Endothelial cell of umbilical vein (primary cell): ENCODE measurements at regions of chr1 and their contacts with region 1.

Region 1: DNA sequence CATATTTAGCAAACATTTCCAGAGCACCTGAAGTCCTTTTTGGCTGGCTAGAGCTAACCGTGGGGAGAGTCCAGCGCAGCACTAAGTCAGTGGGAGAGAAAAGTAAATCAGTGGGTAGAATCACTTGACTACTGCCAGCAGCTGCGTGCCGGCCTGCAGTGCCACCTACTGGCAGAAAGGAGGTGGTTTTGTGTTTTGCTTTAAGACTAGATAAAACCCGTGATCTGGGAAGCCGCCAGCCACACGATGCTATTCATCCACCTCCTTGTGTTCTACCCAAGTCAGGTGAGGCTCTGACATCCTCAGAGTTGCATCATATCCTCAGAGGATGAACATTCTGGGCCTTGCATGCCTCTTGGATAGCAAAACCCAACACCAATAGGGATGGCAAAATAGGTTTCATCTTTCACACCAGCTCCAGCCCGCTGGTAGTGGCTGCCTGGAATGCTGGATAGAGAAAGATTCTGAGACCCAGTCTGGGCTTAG is 14.1 kb upstream of the HEYL start:
- DNase-seq: peak; percentile 73
- H3K4me3 ChIP-seq: no peak overlapping the region
- H3K27ac ChIP-seq: no peak overlapping the region
- H3K4me1 ChIP-seq: no peaks in the 10 kb centered on the region
- H3K27me3 ChIP-seq: peaks cover 9 to 10% of the 10 kb centered on the region in 2 experiments
- CTCF ChIP-seq: peak; percentile 85 to 90
- POLR2A ChIP-seq: no peak

Region 2: GRCh38 chr1:39632682-39633417 is 20.7 kb before region 1 on chr1:
- CTCF ChIA-PET with region 1: interaction called, 14 read pairs
- POLR2A ChIA-PET with region 1: no interaction called
- dilution Hi-C with region 1: no loop called
- intact Hi-C with region 1: no loop called
- DNase-seq: peak; percentile 38
- H3K4me3 ChIP-seq: no peak overlapping the region
- H3K27ac ChIP-seq: no peak overlapping the region
- H3K4me1 ChIP-seq: no peaks in the 10 kb centered on the region
- H3K27me3 ChIP-seq: peaks cover 59 to 70% of the 10 kb centered on the region in 2 experiments
- CTCF ChIP-seq: no peak
- POLR2A ChIP-seq: no peak

Region 3: GRCh38 chr1:39639305-39640130 is 14.1 kb before region 1 on chr1 and contains the start of gene HEYL:
- CTCF ChIA-PET with region 1: interaction called, 14 read pairs
- POLR2A ChIA-PET with region 1: interaction called, 3 read pairs
- dilution Hi-C with region 1: no loop called
- intact Hi-C with region 1: no loop called
- DNase-seq: no peak
- H3K4me3 ChIP-seq: no peak within 1 kb of the TSS
- H3K27ac ChIP-seq: no peak within 1 kb of the TSS
- H3K4me1 ChIP-seq: no peaks in the 10 kb centered on the region
- H3K27me3 ChIP-seq: peaks cover 44 to 59% of the 10 kb centered on the region in 2 experiments
- CTCF ChIP-seq: peak; percentile 14 to 32
- POLR2A ChIP-seq: no peak
- total RNA-seq, gene HEYL: not detected in 2 replicates

Region 4: DNA sequence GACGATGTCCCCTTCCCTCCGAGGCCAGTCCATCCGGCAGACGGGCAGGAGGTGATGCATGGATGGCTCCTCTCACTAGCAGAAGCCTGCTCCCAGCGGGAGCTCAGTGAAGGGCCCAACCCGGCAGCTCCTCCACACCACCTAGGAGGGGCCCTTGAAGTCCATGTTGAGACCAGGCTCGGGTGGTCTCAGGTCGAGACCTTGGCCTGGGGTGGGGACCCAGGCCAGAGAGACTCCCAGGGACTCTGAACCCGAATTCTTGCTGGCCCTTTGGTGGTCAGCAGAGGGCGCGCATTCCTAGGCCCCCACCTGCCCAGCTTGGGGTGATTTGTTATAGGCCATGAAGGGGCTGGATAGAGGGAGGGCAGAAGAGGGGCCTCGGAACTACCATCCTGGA is 19.0 kb after region 1 on chr1:
- CTCF ChIA-PET with region 1: interaction called, 113 read pairs
- POLR2A ChIA-PET with region 1: interaction called, 4 read pairs
- dilution Hi-C with region 1: no loop called
- intact Hi-C with region 1: no loop called
- DNase-seq: peak; percentile 13
- H3K4me3 ChIP-seq: no peak overlapping the region
- H3K27ac ChIP-seq: no peak overlapping the region
- H3K4me1 ChIP-seq: no peaks in the 10 kb centered on the region
- H3K27me3 ChIP-seq: peaks cover 42 to 49% of the 10 kb centered on the region in 2 experiments
- CTCF ChIP-seq: peak; percentile 39 to 66
- POLR2A ChIP-seq: no peak

Region 5: DNA sequence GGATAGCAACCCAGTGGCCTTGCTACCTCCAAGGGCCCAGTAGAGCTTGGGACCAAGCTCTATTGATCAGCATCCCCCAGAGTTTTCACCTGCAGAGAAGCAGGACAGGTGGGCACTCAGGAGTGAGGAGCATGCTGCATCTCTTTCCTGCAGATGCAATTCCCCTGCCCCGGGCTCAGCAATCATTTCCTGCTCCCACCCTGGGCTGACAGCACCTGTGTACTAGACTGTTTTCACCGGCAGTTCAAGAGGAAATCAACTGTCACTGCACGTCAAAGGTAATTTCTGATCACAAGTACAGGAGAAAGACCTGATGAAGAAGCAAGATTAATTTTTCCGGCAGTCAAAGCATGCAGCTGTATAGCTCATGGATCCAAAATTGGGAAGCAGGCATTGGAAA is 27.2 kb after region 1 on chr1:
- CTCF ChIA-PET with region 1: interaction called, 20 read pairs
- POLR2A ChIA-PET with region 1: no interaction called
- dilution Hi-C with region 1: no loop called
- intact Hi-C with region 1: no loop called
- DNase-seq: no peak
- H3K4me3 ChIP-seq: no peak overlapping the region
- H3K27ac ChIP-seq: no peak overlapping the region
- H3K4me1 ChIP-seq: no peaks in the 10 kb centered on the region
- H3K27me3 ChIP-seq: peaks cover 40 to 50% of the 10 kb centered on the region in 2 experiments
- CTCF ChIP-seq: no peak
- POLR2A ChIP-seq: no peak

Region 6: DNA sequence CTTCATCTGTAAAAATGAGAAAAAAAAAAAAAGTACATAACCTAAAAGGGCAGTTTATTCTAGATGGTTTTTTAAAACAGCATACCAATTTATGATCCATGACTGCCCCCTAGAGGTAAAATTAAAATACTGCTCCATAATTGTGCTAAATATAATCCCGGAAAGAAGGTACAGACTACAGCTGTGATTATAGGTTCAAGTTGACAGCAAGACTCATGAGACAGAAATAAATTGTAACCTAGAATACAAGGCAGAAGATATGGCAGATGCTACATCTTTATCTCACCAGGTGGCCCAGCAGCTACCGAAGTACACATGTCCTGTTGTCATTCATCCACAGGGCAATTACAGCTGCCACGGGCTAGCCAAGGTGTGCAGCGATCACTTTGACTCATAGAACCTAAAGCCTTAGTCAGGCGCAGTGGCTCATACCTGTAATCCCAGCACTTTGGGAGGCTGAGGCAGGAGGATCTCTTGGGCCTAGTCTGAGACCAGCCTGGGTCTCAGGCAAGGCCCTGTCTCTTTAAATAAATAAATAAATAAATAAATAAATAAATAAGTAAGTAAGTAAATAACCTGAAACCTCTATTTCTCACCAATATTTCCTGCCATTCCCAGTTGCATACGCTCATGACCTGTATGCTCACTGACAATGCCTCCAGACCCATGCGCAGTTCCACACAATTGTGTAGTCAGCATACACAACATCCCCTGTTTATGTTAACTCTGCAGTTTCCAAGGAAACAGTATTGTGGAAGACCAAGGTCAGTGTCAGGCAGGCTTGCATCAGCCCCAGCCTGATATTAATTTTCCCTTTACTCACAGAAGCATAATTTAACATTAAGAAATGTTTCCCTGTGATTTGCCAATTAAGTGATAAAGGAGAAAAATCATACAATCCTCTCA is 66.8 kb after region 1 on chr1:
- CTCF ChIA-PET with region 1: interaction called, 14 read pairs
- POLR2A ChIA-PET with region 1: no interaction called
- dilution Hi-C with region 1: no loop called
- intact Hi-C with region 1: loop called (anchors 5 kb)
- DNase-seq: peak; percentile 68
- H3K4me3 ChIP-seq: no peak overlapping the region
- H3K27ac ChIP-seq: no peak overlapping the region
- H3K4me1 ChIP-seq: no peaks in the 10 kb centered on the region
- H3K27me3 ChIP-seq: peaks cover 25 to 55% of the 10 kb centered on the region in 2 experiments
- CTCF ChIP-seq: peak in 1 of 2 donors; percentile 33
- POLR2A ChIP-seq: no peak